ENCODE measurements at regions of chr18 and their contacts with region 1.

Region 1: DNA sequence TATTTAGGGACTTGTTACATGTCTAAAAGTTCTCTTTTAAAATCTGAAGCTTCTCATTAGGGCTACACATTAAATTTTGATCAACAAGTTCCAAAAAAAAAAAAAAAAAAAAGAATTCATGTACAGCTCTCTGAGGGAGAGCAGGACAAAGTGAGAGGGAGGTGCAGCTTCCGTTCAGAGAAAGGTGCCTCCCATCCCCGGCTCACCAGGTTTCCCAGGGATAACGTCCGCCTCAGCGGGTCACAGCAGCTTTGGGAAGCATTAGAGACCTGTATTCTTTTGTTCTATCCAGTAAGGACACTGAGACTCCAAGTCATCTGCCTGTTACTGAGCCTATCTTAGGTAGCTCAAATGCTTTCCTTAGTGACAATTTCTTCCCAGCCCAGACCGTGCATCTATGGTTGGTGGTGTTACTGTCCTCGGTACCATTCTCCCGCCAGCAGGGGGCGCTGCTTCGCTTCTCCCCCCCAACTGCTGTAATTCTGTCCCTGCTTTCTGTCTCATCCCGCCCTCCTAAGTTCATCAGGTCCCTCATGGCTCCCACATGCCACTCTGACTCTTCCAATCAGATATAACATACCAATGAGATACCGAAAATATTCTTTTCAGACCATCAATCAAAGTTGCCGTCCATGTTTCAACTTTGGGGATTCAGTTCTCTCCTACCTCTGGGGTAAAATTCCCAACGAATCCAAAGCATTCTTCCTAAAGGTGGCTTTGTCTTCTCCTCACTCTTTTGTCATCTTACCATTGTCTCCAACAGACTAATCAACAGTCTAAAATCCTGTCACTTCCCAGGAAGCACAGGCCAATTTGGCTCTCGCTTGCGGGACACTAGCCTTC is 466.5 kb downstream of the METTL4 start:
- DNase-seq: peak; percentile 64
- ATAC-seq: peak; percentile 94
- H3K4me3 ChIP-seq: no peak overlapping the region
- H3K27ac ChIP-seq: no peak overlapping the region
- H3K4me1 ChIP-seq: 0 out of 2 replicates have a peak, but pooled peaks cover 7% of the 10 kb centered on the region
- H3K27me3 ChIP-seq: no peaks in the 10 kb centered on the region
- CTCF ChIP-seq: peak; percentile 95

Region 2: GRCh38 chr18:2134364-2134763 is 29.5 kb after region 1 on chr18:
- CTCF ChIA-PET with region 1: interaction called, 11 read pairs
- POLR2A ChIA-PET with region 1: no interaction called
- intact Hi-C with region 1: loop called (anchors 2 kb)
- DNase-seq: no peak
- ATAC-seq: peak; percentile 77
- H3K4me3 ChIP-seq: no peak overlapping the region
- H3K27ac ChIP-seq: no peak overlapping the region
- H3K4me1 ChIP-seq: peaks cover 4% of the 10 kb centered on the region
- H3K27me3 ChIP-seq: no peaks in the 10 kb centered on the region
- CTCF ChIP-seq: peak; percentile 40; the same call in 1 of the 2 replicates

Region 3: GRCh38 chr18:2139691-2140090 is 34.9 kb after region 1 on chr18:
- CTCF ChIA-PET with region 1: interaction called, 11 read pairs
- POLR2A ChIA-PET with region 1: no interaction called
- intact Hi-C with region 1: loop called (anchors 2 kb)
- DNase-seq: peak; percentile 88
- ATAC-seq: peak; percentile 94
- H3K4me3 ChIP-seq: no peak overlapping the region
- H3K27ac ChIP-seq: peak overlapping the region; percentile 12; the same call in 1 of the 2 replicates
- H3K4me1 ChIP-seq: peaks cover 18% of the 10 kb centered on the region
- H3K27me3 ChIP-seq: no peaks in the 10 kb centered on the region
- CTCF ChIP-seq: no peak

Measured in PC-3 (cell line).